Activated CD4-positive, alpha-beta T cell treated with anti-CD3 and anti-CD28 coated beads, Interleukin-2, amount 10 ng/mL, durations not matched to agents 7 days and 5 days (primary cell): ENCODE measurements at regions of chr3 and their contacts with region 1.

Region 1: GRCh38 chr3:32321095-32321790 is 70.4 kb upstream of the CMTM7 start:
- DNase-seq: no peak
- H3K4me3 Mint-ChIP-seq: no peak overlapping the region
- H3K27ac Mint-ChIP-seq: no peak overlapping the region
- H3K4me1 Mint-ChIP-seq: peaks cover 5% of the 10 kb centered on the region
- H3K27me3 Mint-ChIP-seq: no peaks in the 10 kb centered on the region

Region 2: GRCh38 chr3:31661993-31662686 is 659.1 kb before region 1 on chr3:
- CTCF ChIA-PET with region 1: no interaction called
- POLR2A ChIA-PET with region 1: no interaction called
- DNase-seq: no peak
- H3K4me3 Mint-ChIP-seq: no peak overlapping the region
- H3K27ac Mint-ChIP-seq: no peak overlapping the region
- H3K4me1 Mint-ChIP-seq: peaks cover 3% of the 10 kb centered on the region
- H3K27me3 Mint-ChIP-seq: no peaks in the 10 kb centered on the region

Region 3: DNA sequence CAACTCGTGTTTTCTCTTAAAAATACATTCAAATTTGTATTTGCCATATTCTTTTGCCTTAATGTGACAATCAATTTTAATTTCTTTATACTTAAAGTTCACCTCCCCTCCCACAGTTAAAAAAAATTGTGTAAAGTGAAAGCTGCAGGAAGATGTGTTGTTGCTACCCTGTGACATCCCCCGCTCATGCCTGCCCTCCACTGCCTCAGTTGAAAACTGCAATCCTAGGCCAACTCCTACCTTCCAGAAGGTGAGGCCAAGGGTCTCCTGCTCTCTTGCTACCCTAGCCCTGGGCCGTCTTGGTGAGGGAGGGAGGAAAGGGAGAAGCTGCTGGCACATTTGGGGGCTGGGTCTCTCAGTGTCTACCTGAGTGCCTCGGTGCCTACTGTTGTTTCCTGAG is 13.4 kb after region 1 on chr3:
- CTCF ChIA-PET with region 1: interaction called, 13 read pairs
- POLR2A ChIA-PET with region 1: no interaction called
- DNase-seq: peak; percentile 68
- H3K4me3 Mint-ChIP-seq: no peak overlapping the region
- H3K27ac Mint-ChIP-seq: peak overlapping the region; percentile 88
- H3K4me1 Mint-ChIP-seq: peaks cover 45% of the 10 kb centered on the region
- H3K27me3 Mint-ChIP-seq: no peaks in the 10 kb centered on the region